A673 (cell line): ENCODE measurements at regions of chrX and their contacts with region 1.

Region 1: DNA sequence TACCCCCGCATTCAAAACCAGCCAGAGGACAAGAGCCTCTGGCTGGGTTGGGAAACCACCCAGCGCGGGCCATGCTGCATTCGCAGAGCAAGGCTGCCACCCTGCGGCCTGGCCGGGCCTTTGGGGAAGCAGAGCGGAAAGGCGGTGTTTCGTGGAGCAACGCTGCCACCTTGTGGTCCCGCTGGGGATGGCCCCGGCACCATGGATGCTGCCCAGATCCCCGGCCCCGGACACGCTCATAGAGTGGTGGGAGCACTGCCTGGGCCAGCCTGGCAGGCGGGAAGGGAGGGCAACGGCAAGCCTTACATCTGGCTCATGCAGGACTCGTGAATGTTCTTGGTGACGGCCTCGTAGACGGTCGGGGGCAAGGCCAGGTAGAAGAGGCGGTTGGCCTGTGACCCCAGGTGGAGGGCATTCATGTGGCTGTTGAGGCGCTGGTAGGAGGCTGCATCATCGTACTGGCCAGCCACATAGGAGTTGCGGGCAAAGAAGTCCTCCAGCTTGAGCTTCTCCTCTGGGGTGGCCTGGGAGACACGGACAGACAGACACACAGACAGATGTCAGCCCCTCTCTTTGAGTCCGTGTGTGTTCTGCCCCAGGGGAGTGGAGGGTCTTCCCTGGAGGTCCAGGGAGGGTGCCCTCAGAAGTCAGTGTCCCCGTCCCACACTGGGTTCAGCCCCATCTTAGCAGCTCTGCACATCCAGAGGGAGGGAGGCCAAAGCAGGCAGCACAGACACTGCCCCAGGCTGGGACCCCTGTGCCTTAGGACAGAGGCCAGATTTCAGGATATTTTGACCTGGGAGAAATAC is 11.6 kb downstream of the G6PD start:
- DNase-seq: peak; percentile 92
- H3K4me3 ChIP-seq: no peak overlapping the region
- H3K27ac ChIP-seq: no peak overlapping the region
- H3K4me1 ChIP-seq: peaks cover 4% of the 10 kb centered on the region
- H3K27me3 ChIP-seq: no peaks in the 10 kb centered on the region
- CTCF ChIP-seq: peak; percentile 100

Region 2: GRCh38 chrX:152958524-152959465 is 1576.3 kb before region 1 on chrX:
- CTCF ChIA-PET with region 1: no interaction called
- POLR2A ChIA-PET with region 1: no interaction called
- intact Hi-C with region 1: loop called (anchors 10 kb)
- DNase-seq: peak; percentile 91
- H3K4me3 ChIP-seq: no peak overlapping the region
- H3K27ac ChIP-seq: no peak overlapping the region
- H3K4me1 ChIP-seq: no peaks in the 10 kb centered on the region
- H3K27me3 ChIP-seq: no peaks in the 10 kb centered on the region
- CTCF ChIP-seq: peak; percentile 89

Region 3: DNA sequence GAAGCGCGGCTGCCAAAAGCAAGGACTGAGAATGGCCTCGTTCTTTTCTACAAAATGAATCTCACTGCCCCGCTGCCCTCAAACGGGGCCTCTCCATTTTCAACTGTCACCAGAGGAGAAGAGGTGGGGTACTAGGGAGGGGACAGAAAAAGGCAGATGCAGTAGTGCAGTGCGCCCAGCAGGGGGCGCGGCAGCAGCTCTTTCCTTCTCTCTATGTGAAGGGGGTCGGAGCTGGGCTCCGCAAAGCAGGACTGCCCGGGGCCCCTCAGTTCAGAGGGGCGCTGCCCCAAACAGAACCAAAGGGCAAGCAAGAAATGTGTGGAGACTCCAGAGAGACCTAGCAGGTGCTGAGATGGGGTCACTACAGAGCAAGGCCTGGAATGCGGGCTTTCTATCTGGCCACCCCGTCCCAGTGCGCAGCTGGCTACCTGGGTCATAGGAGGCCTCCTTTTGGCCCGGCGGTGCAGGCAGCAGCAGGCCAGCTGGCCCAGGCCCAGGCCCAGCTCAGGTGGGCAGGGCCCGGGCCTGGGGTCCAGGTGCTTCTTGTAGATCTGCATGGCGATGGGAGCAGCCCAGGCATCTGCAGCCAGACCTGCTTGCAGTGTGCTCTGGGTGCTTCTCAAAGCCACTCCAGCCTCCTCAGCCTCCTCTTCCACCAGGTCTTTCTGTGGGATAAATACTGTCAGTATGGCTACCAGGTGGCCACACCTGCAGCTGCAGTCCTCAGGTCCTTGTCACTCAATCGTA is 521.3 kb before region 1 on chrX:
- CTCF ChIA-PET with region 1: no interaction called
- POLR2A ChIA-PET with region 1: no interaction called
- intact Hi-C with region 1: loop called (anchors 2 kb)
- DNase-seq: peak; percentile 65
- H3K4me3 ChIP-seq: no peak overlapping the region
- H3K27ac ChIP-seq: no peak overlapping the region
- H3K4me1 ChIP-seq: no peaks in the 10 kb centered on the region
- H3K27me3 ChIP-seq: no peaks in the 10 kb centered on the region
- CTCF ChIP-seq: peak; percentile 96

Region 4: GRCh38 chrX:154370882-154371770 is 163.9 kb before region 1 on chrX:
- CTCF ChIA-PET with region 1: no interaction called
- POLR2A ChIA-PET with region 1: no interaction called
- intact Hi-C with region 1: loop called (anchors 1 kb)
- DNase-seq: peak; percentile 97
- H3K4me3 ChIP-seq: peak overlapping the region; percentile 81
- H3K27ac ChIP-seq: peak overlapping the region; percentile 96
- H3K4me1 ChIP-seq: peaks cover 21% of the 10 kb centered on the region
- H3K27me3 ChIP-seq: no peaks in the 10 kb centered on the region
- CTCF ChIP-seq: no peak

Region 5: DNA sequence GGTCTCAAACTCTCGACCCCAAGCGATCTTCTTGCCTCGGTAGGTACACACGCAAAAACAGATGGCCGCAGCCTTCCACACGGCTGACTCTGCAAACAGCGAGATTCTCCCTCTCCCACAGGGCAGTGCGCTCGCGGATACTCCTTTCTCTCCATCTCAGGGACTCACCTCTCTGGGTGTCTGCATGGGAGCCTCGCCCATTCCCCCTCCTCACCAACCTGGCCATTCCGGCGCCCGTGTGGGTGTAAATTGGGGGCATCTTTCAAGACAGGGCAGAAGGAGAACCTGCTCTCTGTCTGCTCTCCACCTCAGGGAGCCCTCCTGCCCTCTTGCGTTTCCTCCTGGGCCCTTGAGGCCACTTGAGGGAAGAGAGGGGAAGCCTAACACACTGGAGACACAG is 113.9 kb after region 1 on chrX:
- CTCF ChIA-PET with region 1: no interaction called
- POLR2A ChIA-PET with region 1: no interaction called
- intact Hi-C with region 1: no loop called
- DNase-seq: no peak
- H3K4me3 ChIP-seq: no peak overlapping the region
- H3K27ac ChIP-seq: no peak overlapping the region
- H3K4me1 ChIP-seq: no peaks in the 10 kb centered on the region
- H3K27me3 ChIP-seq: no peaks in the 10 kb centered on the region
- CTCF ChIP-seq: no peak